Activated CD8-positive, alpha-beta memory T cell treated with anti-CD3 and anti-CD28 coated beads, Interleukin-2, amount 10 ng/mL, durations not matched to agents 7 days and 5 days (primary cell): ENCODE measurements at regions of chr16 and their contacts with region 1.

Region 1: GRCh38 chr16:89115216-89115861 is 21.7 kb downstream of the ACSF3 start:
- DNase-seq: peak; percentile 90
- ATAC-seq: peak; percentile 91
- H3K4me3 Mint-ChIP-seq: peak overlapping the region; percentile 61
- H3K27ac Mint-ChIP-seq: peak overlapping the region; percentile 95
- H3K4me1 Mint-ChIP-seq: peaks cover 31% of the 10 kb centered on the region
- H3K27me3 Mint-ChIP-seq: no peaks in the 10 kb centered on the region

Region 2: DNA sequence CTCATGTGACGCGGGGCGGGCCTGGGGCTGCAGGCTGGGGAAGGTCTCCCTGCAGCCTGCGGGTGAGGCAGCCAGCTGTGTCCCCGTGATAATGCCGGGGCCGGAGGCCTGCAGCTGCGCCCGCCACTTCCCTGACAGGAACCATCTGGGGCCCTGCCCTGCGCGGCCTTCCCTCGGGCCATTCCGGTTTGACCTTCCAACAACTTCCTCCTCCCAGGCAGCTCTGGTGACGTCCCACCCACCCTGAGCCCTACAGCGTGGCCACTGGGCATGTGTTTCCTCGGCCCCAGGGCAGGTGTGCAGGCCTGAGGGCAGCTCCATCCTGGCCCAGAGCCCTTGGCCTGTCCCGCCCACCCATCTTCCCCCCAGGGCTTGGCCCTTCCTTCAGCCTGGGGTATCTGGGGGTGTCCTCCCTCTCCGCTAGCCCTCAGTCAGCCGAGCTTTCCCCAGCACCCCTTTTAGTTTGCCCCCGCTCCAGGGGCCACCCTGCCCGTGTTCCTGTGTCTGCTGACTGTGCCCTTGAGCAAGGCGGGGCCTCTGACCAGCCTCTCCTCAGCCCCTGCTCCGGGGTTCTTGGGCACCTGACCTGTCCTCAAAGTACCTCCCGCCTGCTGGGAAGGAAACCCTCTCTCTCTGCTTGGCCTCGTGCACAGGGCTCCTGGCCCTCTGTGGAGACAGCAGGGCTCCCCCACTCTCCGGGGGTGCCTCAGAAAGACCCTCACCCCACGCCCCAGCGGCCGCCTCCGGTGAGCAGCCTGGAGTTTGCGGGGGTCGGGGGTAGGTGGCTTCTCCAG is 138.1 kb before region 1 on chr16 and contains the start of gene CBFA2T3:
- CTCF ChIA-PET with region 1: no interaction called
- DNase-seq: no peak
- ATAC-seq: no peak
- H3K4me3 Mint-ChIP-seq: no peak within 1 kb of the TSS
- H3K27ac Mint-ChIP-seq: no peak within 1 kb of the TSS
- H3K4me1 Mint-ChIP-seq: peaks cover 7% of the 10 kb centered on the region
- H3K27me3 Mint-ChIP-seq: peaks cover 37% of the 10 kb centered on the region
- total RNA-seq, gene CBFA2T3: 0.21 TPM in 1 of 2 experiments, not detected in the other

Region 3: GRCh38 chr16:89099905-89100304 is 15.4 kb before region 1 on chr16:
- CTCF ChIA-PET with region 1: interaction called, 22 read pairs
- DNase-seq: no peak
- ATAC-seq: no peak
- H3K4me3 Mint-ChIP-seq: no peak overlapping the region
- H3K27ac Mint-ChIP-seq: peak overlapping the region; percentile 79
- H3K4me1 Mint-ChIP-seq: peaks cover 74% of the 10 kb centered on the region
- H3K27me3 Mint-ChIP-seq: no peaks in the 10 kb centered on the region

Region 4: GRCh38 chr16:89130448-89130847 is 15.1 kb after region 1 on chr16:
- CTCF ChIA-PET with region 1: no interaction called
- DNase-seq: no peak
- ATAC-seq: no peak
- H3K4me3 Mint-ChIP-seq: no peak overlapping the region
- H3K27ac Mint-ChIP-seq: no peak overlapping the region
- H3K4me1 Mint-ChIP-seq: peaks cover 7% of the 10 kb centered on the region
- H3K27me3 Mint-ChIP-seq: no peaks in the 10 kb centered on the region